ENCODE measurements at regions of chr19 and their contacts with region 1.

Region 1: GRCh38 chr19:23249911-23250649 is at the start of gene ZNF724:
- DNase-seq: peak; percentile 94
- ATAC-seq: peak; percentile 100
- H3K4me3 Mint-ChIP-seq: peak within 1 kb of the TSS; percentile 87
- H3K27ac Mint-ChIP-seq: peak within 1 kb of the TSS; percentile 96
- H3K4me1 Mint-ChIP-seq: peaks cover 12% of the 10 kb centered on the region
- H3K27me3 Mint-ChIP-seq: no peaks in the 10 kb centered on the region
- total RNA-seq, gene ZNF724: 15.1 to 19.1 TPM

Region 2: DNA sequence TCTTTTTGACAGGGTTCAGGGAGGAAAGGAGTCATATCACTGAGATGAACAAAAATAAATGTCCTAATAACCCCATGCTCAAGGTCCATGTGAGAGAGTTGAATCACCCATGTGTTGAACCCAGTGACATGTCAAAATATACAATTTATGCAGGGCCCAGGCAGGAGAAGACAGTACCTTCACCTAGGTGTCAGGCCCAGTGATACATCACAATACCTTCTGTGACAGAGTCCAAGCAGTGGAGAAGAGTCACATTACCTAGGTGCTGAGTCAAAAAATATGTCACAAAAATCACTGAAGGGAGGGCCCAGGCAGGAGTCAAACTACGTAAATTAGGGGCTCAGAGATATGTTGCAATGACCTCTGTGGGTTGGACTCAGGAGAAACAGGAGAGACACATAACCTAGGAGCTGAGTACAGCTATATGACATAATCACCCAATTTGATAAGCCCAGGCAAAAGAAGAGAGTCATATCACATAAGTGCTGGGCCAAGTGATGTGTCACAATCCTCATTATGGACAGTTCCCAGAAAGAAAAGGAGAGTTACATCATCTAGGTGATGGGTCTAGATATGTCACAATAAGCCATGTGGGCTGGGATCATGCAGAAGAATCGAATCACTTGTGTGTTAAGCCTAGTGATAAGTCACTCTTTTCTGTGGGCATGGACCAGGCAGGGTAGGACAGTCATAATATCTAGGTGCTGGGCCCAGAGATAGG is 13.9 kb after region 1 on chr19:
- CTCF ChIA-PET with region 1: interaction called, 4 read pairs
- POLR2A ChIA-PET with region 1: interaction called, 4 read pairs
- intact Hi-C with region 1: loop called in 1 of 2 experiments (anchors 1 kb)
- DNase-seq: peak; percentile 44
- ATAC-seq: peak; percentile 89
- H3K4me3 Mint-ChIP-seq: no peak overlapping the region
- H3K27ac Mint-ChIP-seq: peak overlapping the region; percentile 22
- H3K4me1 Mint-ChIP-seq: peaks cover 8% of the 10 kb centered on the region
- H3K27me3 Mint-ChIP-seq: no peaks in the 10 kb centered on the region

Region 3: DNA sequence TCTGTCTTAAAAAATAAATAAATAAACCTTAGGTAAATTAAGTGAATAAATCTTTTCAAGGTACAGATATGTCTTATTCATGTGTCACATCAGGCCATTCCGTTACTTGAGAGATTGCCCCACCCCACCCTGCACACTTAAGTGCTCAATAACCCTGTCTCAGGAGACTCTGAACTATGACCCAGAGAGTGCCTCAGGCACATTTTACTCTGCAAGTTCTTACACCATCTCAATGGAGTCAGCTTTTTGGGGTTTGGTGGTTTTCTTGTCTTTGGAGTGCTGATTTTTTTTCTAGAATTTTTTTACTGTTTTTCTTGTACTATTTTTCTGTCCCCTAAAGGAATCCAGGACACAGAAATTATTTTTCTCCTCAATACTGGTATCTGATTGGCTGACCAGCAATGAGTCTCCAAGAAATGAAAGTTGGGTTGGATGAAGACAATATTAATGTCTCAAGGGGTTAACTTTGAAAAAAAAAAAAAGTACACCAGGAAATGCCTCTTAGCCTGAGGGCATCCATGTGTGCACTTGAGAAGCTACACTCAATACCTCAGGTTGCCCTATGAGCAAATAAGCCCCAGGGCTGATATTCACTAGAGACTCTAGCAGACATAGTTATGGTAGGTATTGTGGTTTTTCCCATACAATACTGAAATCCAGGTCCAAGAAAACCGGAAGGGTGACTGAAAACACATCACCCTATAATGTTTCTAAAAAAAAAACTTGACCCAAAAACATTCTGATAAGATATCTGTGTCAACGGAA is 259.8 kb after region 1 on chr19:
- CTCF ChIA-PET with region 1: no interaction called
- POLR2A ChIA-PET with region 1: no interaction called
- intact Hi-C with region 1: no loop called
- DNase-seq: no peak
- ATAC-seq: no peak
- H3K4me3 Mint-ChIP-seq: no peak overlapping the region
- H3K27ac Mint-ChIP-seq: no peak overlapping the region
- H3K4me1 Mint-ChIP-seq: no peaks in the 10 kb centered on the region
- H3K27me3 Mint-ChIP-seq: no peaks in the 10 kb centered on the region

Measured in activated CD4-positive, alpha-beta T cell treated with anti-CD3 and anti-CD28 coated beads for 36 hours (primary cell).